ENCODE measurements at regions of chr5 and their contacts with region 1.

Region 1: GRCh38 chr5:171494452-171495121 is 75.1 kb downstream of the FGF18 start:
- DNase-seq: peak; percentile 69 to 79 (median 75)
- ATAC-seq: peak; percentile 74 to 88 (median 84)
- H3K4me3 ChIP-seq: peak overlapping the region in 4 of 12 donors; percentile 3 to 28 (median 10)
- H3K27ac ChIP-seq: peak overlapping the region; percentile 61 to 90 (median 80)
- H3K4me1 ChIP-seq: peaks cover 2 to 43% (median 24%) of the 10 kb centered on the region in 12 donors
- H3K27me3 ChIP-seq: no peaks in the 10 kb centered on the region
- CTCF ChIP-seq: no peak
- POLR2A ChIP-seq: no peak

Region 2: GRCh38 chr5:171571663-171572062 is 77.1 kb after region 1 on chr5:
- intact Hi-C with region 1: loop called in 1 of 10 experiments (anchors 10 kb)
- DNase-seq: no peak
- ATAC-seq: no peak
- H3K4me3 ChIP-seq: no peak overlapping the region
- H3K27ac ChIP-seq: peak overlapping the region in 1 of 12 donors; percentile 78
- H3K4me1 ChIP-seq: peaks cover 0 to 18% (median 0%) of the 10 kb centered on the region in 12 donors
- H3K27me3 ChIP-seq: no peaks in the 10 kb centered on the region
- CTCF ChIP-seq: no peak
- POLR2A ChIP-seq: no peak

Measured in heart left ventricle (tissue), 16 donors.